ENCODE measurements at regions of chr11 and their contacts with region 1.

Region 1: DNA sequence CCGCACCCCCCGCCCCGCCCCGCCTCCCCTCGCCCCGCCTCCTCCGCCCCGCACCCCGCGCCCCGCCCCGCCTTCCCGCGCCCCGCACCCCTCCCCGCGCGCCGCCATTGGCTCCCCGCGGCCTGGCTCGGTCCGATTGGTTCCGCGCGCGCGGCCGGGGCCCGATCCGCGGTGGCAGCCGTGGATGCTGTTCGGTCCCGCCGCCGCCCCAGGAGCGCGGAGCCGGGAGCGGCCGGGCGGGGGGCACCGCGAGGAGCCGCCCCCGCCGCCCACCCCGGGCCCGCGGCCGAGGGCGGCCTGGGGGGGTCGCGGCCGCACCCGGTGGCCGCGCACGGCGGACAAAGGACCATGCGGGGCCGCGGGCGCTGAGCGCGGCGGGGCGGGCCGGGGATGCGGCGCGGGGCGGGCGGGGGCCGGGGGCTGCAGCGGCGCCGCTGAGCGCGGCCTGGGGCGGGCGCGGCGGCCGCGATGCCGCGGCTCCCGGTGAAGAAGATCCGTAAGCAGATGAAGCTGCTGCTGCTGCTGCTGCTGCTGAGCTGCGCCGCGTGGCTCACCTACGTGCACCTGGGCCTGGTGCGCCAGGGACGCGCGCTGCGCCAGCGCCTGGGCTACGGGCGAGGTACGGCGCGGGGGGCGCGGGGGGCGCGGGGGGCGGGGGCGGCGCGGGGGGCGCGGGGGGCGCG is at the start of gene B4GALNT4:
- DNase-seq: no peak
- H3K4me3 ChIP-seq: peak within 1 kb of the TSS; percentile 70 to 78 (median 74)
- H3K27ac ChIP-seq: peak within 1 kb of the TSS; percentile 45
- H3K4me1 ChIP-seq: peaks cover 0 to 10% (median 6%) of the 10 kb centered on the region in 4 experiments; a peak in 6 of 7 replicates
- H3K27me3 ChIP-seq: peaks cover 0 to under 1% (median under 1%) of the 10 kb centered on the region in 4 experiments; a peak in 1 of 7 replicates
- CTCF ChIP-seq: no peak
- EP300 ChIP-seq: no peak
- POLR2A ChIP-seq: no peak
- RAD21 ChIP-seq: no peak
- total RNA-seq, gene B4GALNT4: 76.3 and 89.0 TPM in 2 replicates

Region 2: DNA sequence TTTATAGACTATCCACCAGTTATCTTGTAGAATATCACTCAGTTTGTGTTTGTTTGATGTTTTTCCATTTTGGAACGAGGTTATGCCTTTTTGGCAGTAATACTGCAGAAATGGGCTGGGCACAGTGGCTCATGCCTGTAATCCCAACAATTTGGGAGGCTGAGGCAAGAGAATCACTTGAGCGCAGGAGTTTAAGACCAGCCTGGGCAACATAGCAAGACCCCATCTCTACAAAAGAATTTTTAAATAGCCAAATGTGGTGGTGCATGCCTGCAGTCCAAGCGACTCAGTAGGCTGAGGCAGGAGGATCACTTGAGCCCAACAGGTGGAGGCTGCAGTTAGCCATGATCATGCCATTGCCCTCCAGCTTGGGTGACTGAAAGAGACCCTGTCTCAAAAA is 22.9 kb before region 1 on chr11:
- CTCF ChIA-PET with region 1: no interaction called
- POLR2A ChIA-PET with region 1: no interaction called
- DNase-seq: no peak
- H3K4me3 ChIP-seq: no peak overlapping the region
- H3K27ac ChIP-seq: no peak overlapping the region
- H3K4me1 ChIP-seq: peaks cover 0 to 10% (median 6%) of the 10 kb centered on the region in 4 experiments; a peak in 5 of 7 replicates
- H3K27me3 ChIP-seq: no peaks in the 10 kb centered on the region
- CTCF ChIP-seq: no peak
- EP300 ChIP-seq: no peak
- POLR2A ChIP-seq: no peak
- RAD21 ChIP-seq: no peak

Region 3: GRCh38 chr11:382081-382629 is 12.7 kb after region 1 on chr11:
- CTCF ChIA-PET with region 1: interaction called, 11 read pairs
- POLR2A ChIA-PET with region 1: interaction called, 19 read pairs
- DNase-seq: no peak
- H3K4me3 ChIP-seq: no peak overlapping the region
- H3K27ac ChIP-seq: no peak overlapping the region
- H3K4me1 ChIP-seq: no peaks in the 10 kb centered on the region
- H3K27me3 ChIP-seq: no peaks in the 10 kb centered on the region
- CTCF ChIP-seq: no peak
- EP300 ChIP-seq: no peak
- POLR2A ChIP-seq: no peak
- RAD21 ChIP-seq: no peak

Region 4: DNA sequence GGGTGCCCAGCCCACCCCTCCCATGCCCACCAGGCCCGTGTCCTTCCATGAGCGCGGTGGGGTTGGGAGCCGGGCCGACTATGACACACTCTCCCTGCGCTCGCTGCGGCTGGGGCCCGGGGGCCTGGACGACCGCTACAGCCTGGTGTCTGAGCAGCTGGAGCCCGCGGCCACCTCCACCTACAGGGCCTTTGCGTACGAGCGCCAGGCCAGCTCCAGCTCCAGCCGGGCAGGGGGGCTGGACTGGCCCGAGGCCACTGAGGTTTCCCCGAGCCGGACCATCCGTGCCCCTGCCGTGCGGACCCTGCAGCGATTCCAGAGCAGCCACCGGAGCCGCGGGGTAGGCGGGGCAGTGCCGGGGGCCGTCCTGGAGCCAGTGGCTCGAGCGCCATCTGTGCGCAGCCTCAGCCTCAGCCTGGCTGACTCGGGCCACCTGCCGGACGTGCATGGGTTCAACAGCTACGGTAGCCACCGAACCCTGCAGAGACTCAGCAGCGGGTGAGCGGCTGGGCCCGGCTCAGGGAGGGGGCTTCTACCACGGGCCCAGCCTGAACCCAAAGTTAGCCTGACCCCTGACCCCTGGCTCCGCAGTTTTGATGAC is 27.6 kb after region 1 on chr11:
- CTCF ChIA-PET with region 1: interaction called, 10 read pairs
- POLR2A ChIA-PET with region 1: interaction called, 4 read pairs
- DNase-seq: no peak
- H3K4me3 ChIP-seq: no peak overlapping the region
- H3K27ac ChIP-seq: no peak overlapping the region
- H3K4me1 ChIP-seq: peaks cover 6 to 15% (median 6%) of the 10 kb centered on the region in 4 experiments; a peak in 6 of 7 replicates
- H3K27me3 ChIP-seq: no peaks in the 10 kb centered on the region
- CTCF ChIP-seq: 0 out of 4 replicates have a peak, but pooled peaks of 1 of the 3 experiments have one; percentile 15
- EP300 ChIP-seq: no peak
- POLR2A ChIP-seq: no peak
- RAD21 ChIP-seq: no peak

Region 5: DNA sequence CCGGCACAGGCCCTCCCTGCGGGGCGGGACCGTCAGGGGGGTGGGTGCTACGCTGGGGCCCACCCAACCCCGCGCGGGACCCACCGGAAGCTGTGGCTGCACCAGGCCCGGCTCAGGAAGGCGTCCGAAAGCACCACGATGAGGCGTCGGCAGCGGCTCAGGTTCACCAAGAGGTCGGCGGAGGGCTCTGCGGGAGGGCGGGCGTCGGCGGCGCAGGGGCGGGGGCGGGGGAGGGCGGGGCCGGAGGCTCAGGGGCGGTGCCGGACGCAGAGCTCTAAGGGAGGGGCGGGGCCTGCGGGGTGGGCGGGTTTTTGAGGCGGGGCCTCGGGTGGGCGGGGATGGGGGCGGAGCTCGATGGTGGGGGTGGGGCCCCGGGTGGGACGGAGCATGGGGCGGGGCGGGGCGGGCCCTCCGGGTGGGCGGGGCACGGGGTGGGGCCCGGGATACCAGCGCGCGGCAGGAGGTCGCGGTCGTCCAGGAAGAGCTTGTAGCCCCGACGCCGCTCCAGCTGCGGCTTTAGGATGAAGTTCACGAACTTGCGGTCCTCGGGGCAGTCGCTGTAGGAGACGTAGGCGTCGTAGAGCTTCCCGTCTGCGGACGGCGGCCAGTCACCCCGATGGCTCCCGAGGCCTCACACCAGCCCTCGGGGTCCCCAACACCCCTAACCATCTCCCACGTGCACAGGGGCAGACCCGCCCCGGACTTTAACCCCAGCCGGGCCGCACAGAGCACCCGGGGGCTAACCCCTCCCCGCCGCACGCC is 37.7 kb after region 1 on chr11:
- CTCF ChIA-PET with region 1: interaction called, 6 read pairs
- POLR2A ChIA-PET with region 1: interaction called, 14 read pairs
- DNase-seq: peak; percentile 57 to 88
- H3K4me3 ChIP-seq: peak overlapping the region; percentile 8 to 65 (median 29); a peak in 6 of 8 replicates
- H3K27ac ChIP-seq: no peak overlapping the region
- H3K4me1 ChIP-seq: peaks cover 0 to 11% (median 6%) of the 10 kb centered on the region in 4 experiments; a peak in 4 of 7 replicates
- H3K27me3 ChIP-seq: peaks cover 0 to 5% (median 0%) of the 10 kb centered on the region in 4 experiments; a peak in 2 of 7 replicates
- CTCF ChIP-seq: no peak
- EP300 ChIP-seq: no peak
- POLR2A ChIP-seq: no peak
- RAD21 ChIP-seq: no peak

Region 6: DNA sequence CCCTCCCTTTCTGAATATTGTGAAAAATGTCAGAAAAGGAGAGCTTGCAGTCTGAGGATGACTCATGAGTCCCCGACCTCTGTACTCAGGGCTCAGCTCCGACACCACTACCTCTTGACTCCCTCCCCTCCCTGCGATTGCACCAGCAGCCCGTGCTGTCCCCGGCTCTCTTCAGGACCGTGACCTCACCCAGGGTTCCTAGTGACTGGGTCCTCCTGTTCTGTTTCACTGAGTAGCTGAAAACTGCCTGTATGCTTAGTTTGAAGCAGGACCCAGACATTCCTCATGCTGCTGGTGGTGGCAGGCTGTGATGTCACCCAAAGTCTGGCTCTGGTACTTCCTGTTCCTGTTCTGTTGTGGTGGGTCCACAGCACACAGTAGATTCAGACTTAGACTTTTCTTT is 218.5 kb after region 1 on chr11:
- CTCF ChIA-PET with region 1: no interaction called
- POLR2A ChIA-PET with region 1: no interaction called
- DNase-seq: no peak
- H3K4me3 ChIP-seq: no peak overlapping the region
- H3K27ac ChIP-seq: no peak overlapping the region
- H3K4me1 ChIP-seq: no peaks in the 10 kb centered on the region
- H3K27me3 ChIP-seq: no peaks in the 10 kb centered on the region
- CTCF ChIP-seq: no peak
- EP300 ChIP-seq: no peak
- POLR2A ChIP-seq: no peak
- RAD21 ChIP-seq: no peak

Measured in H1 (cell line).